Activated naive CD4-positive, alpha-beta T cell treated with anti-CD3 and anti-CD28 coated beads, Interleukin-2, amount 10 ng/mL, durations not matched to agents 7 days and 5 days (primary cell): ENCODE measurements at regions of chr1 and their contacts with region 1.

Region 1: DNA sequence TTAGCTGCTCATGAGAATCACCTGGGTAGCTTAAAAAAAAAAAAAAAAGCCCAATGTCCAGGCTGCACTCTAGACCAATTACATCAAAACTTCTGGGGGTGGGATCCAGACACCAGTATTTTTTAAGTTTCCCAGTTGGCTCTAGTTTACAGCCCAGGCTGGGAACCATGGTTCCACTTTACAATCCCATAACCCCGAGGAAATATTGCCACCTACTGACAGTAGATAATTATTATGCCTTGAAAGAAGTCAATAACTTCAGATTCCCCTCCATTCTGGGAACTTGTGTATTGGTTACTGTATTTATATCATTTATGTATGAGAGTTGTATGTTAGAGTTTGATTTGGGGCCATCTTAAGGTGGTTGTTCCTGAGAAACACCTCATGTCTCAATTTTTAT is 100.2 kb downstream of the SPATA46 start:
- DNase-seq: no peak
- H3K4me3 Mint-ChIP-seq: no peak overlapping the region
- H3K27ac Mint-ChIP-seq: no peak overlapping the region
- H3K4me1 Mint-ChIP-seq: no peaks in the 10 kb centered on the region
- H3K27me3 Mint-ChIP-seq: peaks cover 3% of the 10 kb centered on the region

Region 2: DNA sequence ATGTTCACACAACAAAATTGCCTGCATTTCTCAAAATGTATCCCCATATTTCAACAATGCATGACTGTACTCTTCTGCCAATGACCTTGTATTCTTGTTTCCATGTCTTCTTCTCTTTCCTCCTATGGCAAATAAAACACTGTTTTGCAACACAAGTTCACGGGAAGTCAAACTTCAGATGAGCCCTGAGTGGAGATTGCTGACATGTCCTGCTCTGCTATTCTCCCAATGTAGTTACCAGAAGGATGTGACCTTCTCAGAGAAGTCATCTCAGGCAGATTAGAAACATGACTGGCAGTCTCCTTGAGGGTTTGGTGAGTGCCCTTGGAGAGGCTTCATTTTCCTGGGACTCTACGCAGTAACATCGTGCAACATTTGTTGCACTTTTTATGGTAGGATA is 598.0 kb before region 1 on chr1:
- CTCF ChIA-PET with region 1: no interaction called
- DNase-seq: no peak
- H3K4me3 Mint-ChIP-seq: no peak overlapping the region
- H3K27ac Mint-ChIP-seq: no peak overlapping the region
- H3K4me1 Mint-ChIP-seq: no peaks in the 10 kb centered on the region
- H3K27me3 Mint-ChIP-seq: peaks cover 22% of the 10 kb centered on the region

Region 3: DNA sequence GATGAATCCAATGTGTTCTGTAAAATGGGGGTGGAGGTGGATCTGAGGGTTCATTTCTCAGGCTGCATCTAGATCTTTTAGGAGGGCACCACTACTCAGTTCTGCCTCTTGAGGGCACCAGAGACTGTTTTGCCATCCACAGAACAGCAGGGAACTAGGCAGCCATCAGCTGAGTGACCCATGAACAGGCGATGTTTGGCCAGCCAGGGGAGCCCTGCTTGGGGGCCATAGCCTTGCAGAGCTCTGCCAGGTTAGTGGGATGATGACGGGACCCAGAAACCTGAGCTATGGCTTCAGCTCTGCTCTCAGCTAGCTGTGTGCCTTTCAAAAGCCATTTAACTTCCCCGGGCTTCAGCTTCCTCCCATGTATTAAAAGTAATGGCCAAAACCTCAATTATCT is 220.4 kb before region 1 on chr1:
- CTCF ChIA-PET with region 1: interaction called, 11 read pairs
- DNase-seq: peak; percentile 62
- H3K4me3 Mint-ChIP-seq: no peak overlapping the region
- H3K27ac Mint-ChIP-seq: no peak overlapping the region
- H3K4me1 Mint-ChIP-seq: no peaks in the 10 kb centered on the region
- H3K27me3 Mint-ChIP-seq: peaks cover 10% of the 10 kb centered on the region

Region 4: GRCh38 chr1:162213281-162213912 is 63.1 kb before region 1 on chr1:
- CTCF ChIA-PET with region 1: no interaction called
- DNase-seq: no peak
- H3K4me3 Mint-ChIP-seq: no peak overlapping the region
- H3K27ac Mint-ChIP-seq: no peak overlapping the region
- H3K4me1 Mint-ChIP-seq: no peaks in the 10 kb centered on the region
- H3K27me3 Mint-ChIP-seq: peaks cover 10% of the 10 kb centered on the region

Region 5: DNA sequence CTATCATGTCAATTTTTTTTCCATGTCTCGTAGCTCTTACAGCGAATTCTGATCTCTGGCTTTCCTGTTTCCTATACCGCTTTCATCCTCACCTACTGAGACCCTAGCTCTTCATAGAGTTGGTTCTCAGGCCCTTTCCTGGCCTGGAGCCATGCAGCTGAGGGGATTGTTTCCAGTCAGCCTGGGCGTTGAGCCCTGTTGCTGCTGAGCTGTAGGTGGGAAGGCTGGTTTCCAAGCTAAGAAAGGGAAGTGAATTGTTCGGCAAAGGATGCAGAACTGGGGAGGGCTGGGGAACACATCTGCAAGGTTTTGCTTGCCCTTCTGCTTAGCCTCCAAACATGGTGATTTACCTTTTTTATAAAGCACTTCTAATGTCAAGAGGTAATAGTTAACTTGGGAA is 58.6 kb after region 1 on chr1:
- CTCF ChIA-PET with region 1: no interaction called
- DNase-seq: no peak
- H3K4me3 Mint-ChIP-seq: no peak overlapping the region
- H3K27ac Mint-ChIP-seq: no peak overlapping the region
- H3K4me1 Mint-ChIP-seq: no peaks in the 10 kb centered on the region
- H3K27me3 Mint-ChIP-seq: peaks cover 8% of the 10 kb centered on the region